Activated T-helper 1 cell treated with anti-CD3 and anti-CD28 coated beads, Interleukin-12 subunit alpha, Interleukin-12 subunit beta, Interleukin-2, Interleukin-4 antibody, amounts not matched to agents 30 ng/mL and 10 ng/mL and 1 ng/mL, durations not matched to agents 14 hours and 24 hours and 36 hours (primary cell): ENCODE measurements at regions of chrX and their contacts with region 1.

Region 1: DNA sequence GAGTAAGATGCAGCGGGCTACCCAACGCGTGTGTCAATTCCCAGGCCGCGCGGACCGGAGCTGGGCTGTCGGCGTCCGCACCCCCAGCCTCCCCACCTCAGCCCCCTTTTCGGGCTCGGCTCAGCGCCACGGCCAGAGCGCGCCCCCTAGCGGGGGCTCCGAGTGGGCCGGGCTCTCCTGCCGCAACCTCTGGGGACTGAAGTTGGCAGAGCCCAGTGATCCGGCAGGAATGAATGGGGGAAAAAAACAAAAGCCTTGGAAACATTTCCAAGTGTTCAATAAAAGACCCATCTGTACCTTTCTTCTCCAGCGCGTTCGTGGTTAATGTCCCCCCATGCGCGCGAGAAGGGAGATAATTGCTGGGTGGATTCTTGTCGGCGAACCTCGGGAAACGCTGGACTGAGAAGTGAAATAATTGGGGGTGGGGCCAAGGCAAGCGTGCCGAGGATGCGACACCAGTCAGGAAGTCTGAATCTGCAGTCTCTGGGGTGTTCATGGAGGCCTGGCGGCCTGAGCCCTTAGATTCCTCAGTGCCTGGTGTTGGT is 5.2 kb upstream of the ARX start:
- DNase-seq: no peak
- H3K4me3 Mint-ChIP-seq: peak overlapping the region; percentile 57
- H3K27ac Mint-ChIP-seq: no peak overlapping the region
- H3K4me1 Mint-ChIP-seq: peaks cover 20% of the 10 kb centered on the region
- H3K27me3 Mint-ChIP-seq: peaks cover 74% of the 10 kb centered on the region

Region 2: DNA sequence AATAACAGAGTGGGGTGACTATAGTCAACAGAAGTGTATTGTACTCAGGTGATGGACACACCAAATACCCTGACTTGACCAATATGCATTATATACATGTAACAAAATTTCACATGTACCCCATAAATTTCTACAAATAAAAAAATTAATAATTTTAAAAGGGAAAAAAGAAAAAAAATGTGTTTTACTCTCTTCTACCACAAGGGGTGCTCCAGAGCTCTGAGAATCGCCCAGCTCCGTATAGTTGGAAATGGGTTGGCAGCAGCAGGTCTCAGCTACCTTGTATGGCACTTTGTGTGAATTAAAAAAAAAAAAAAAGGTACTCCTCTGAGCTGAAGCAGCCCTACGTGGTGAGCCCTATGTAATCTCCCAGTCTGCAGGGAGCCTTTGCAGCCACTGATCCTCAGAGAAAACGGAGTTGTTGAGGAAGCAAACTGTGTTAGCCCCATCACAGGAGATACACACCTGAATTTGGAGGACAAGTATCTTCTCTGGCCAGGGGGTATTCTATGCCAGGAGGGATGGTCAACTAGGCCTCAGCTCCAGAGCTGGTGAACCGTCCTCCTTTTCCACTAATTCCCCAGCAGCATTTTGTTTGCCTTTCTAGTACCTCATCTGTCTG is 344.5 kb before region 1 on chrX:
- intact Hi-C with region 1: no loop called
- DNase-seq: no peak
- H3K4me3 Mint-ChIP-seq: no peak overlapping the region
- H3K27ac Mint-ChIP-seq: no peak overlapping the region
- H3K4me1 Mint-ChIP-seq: no peaks in the 10 kb centered on the region
- H3K27me3 Mint-ChIP-seq: peaks cover 2% of the 10 kb centered on the region

Region 3: GRCh38 chrX:24799565-24799964 is 221.4 kb before region 1 on chrX:
- intact Hi-C with region 1: no loop called
- DNase-seq: no peak
- H3K4me3 Mint-ChIP-seq: no peak overlapping the region
- H3K27ac Mint-ChIP-seq: no peak overlapping the region
- H3K4me1 Mint-ChIP-seq: no peaks in the 10 kb centered on the region
- H3K27me3 Mint-ChIP-seq: no peaks in the 10 kb centered on the region

Region 4: GRCh38 chrX:24838629-24839028 is 182.3 kb before region 1 on chrX:
- intact Hi-C with region 1: loop called (anchors 2 kb)
- DNase-seq: no peak
- H3K4me3 Mint-ChIP-seq: no peak overlapping the region
- H3K27ac Mint-ChIP-seq: no peak overlapping the region
- H3K4me1 Mint-ChIP-seq: no peaks in the 10 kb centered on the region
- H3K27me3 Mint-ChIP-seq: no peaks in the 10 kb centered on the region

Region 5: DNA sequence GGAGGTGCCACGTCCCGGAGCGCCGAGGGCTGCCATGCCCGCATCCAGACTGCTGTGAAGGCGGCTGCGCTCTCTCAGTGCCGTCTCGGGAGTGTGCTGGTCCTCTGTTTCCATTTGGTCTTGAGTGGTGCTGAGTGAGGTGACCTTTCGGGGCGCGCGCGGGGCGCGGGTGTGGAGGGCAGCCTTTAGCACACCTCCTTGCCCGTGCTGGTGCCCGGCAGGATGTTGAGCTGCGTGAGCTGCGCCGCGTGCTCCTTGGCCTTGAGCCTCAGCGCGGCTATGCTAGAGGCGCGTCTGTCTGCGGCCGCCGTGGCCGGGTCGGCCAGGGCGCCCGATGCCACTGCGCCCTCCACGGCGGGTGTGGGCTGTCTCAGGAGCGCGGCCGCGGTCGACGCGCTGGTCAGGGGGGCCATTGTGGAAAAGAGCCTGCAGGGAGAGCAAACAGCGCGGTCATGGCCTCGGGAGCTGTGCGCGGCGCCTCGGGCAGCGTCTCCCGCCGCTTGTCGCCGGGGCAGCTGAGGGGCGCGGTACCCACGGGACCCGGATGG is 16.4 kb before region 1 on chrX:
- intact Hi-C with region 1: loop called (anchors 2 kb)
- DNase-seq: no peak
- H3K4me3 Mint-ChIP-seq: no peak overlapping the region
- H3K27ac Mint-ChIP-seq: no peak overlapping the region
- H3K4me1 Mint-ChIP-seq: no peaks in the 10 kb centered on the region
- H3K27me3 Mint-ChIP-seq: peaks cover 40% of the 10 kb centered on the region

Region 6: GRCh38 chrX:25067271-25068172 is 46.5 kb after region 1 on chrX:
- intact Hi-C with region 1: loop called (anchors 5 kb)
- DNase-seq: no peak
- H3K4me3 Mint-ChIP-seq: peak overlapping the region; percentile 11
- H3K27ac Mint-ChIP-seq: peak overlapping the region; percentile 29
- H3K4me1 Mint-ChIP-seq: peaks cover 11% of the 10 kb centered on the region
- H3K27me3 Mint-ChIP-seq: no peaks in the 10 kb centered on the region

Region 7: GRCh38 chrX:25144043-25144940 is 123.3 kb after region 1 on chrX:
- intact Hi-C with region 1: loop called (anchors 2 kb)
- DNase-seq: no peak
- H3K4me3 Mint-ChIP-seq: no peak overlapping the region
- H3K27ac Mint-ChIP-seq: no peak overlapping the region
- H3K4me1 Mint-ChIP-seq: no peaks in the 10 kb centered on the region
- H3K27me3 Mint-ChIP-seq: peaks cover 13% of the 10 kb centered on the region